ENCODE measurements at regions of chr1 and their contacts with region 1.

Region 1: DNA sequence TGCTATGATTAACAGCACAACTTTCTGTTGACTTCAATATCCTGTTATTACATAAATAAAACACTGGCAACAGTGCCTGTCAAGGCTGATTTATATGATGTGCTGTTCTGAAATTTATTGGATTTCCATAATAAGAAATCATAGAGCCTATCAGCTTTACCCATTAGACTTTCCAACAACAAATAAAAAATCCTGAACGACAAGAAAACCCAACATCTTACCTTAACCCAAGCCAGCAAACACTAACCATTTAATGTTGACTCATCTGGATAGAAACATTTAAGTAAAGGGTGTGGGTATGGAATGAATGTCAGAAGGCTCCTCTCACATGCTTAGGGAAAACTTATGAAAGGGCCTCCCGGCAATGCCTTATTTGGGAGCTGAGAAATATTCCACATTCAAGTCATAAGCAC is 165.1 kb downstream of the SLC45A1 start:
- DNase-seq: no peak
- ATAC-seq: no peak
- H3K4me3 ChIP-seq: no peak overlapping the region
- H3K27ac ChIP-seq: no peak overlapping the region
- H3K4me1 ChIP-seq: peaks cover 6% of the 10 kb centered on the region
- H3K27me3 ChIP-seq: no peaks in the 10 kb centered on the region
- CTCF ChIP-seq: no peak
- EP300 ChIP-seq: no peak
- POLR2A ChIP-seq: no peak
- RAD21 ChIP-seq: no peak

Region 2: DNA sequence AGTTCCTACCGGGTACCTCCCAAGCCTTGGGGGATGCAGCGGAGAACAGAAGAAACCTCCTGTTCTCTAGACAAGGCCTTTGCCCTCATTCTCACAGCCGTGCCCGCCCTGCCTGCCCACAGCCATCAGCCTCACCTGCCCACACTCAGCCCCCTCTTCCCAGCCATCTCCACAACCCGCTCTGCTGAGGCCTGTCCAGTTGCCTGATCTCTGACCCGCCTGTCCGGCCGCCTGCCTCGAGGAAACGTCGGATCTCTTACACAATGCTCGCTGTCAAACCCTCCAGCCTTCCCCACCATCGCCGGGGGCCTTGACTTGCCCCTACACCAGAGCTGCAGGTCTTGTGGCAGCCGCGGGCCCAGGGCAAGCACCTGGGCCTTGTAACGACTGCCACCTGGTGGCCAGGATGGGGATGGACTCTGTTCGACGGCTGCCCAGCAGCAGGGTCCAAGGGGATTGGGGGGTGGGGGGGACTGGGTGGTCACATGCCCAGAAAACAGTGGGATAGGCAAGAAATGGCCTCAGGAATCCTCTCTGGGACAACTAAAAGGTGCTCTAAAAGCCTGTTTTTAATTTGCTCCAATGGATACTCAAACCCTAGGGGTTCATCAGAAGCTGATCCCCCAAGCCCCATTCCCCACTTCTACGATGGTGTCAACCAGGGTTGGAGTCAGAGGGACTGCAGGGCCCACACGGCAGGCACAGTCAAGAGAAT is 134.1 kb before region 1 on chr1:
- CTCF ChIA-PET with region 1: no interaction called
- POLR2A ChIA-PET with region 1: no interaction called
- RAD21 ChIA-PET with region 1: no interaction called
- SMC1A ChIA-PET with region 1: no interaction called
- in situ Hi-C with region 1: no loop called
- intact Hi-C with region 1: no loop called
- DNase-seq: no peak
- ATAC-seq: peak; percentile 88
- H3K4me3 ChIP-seq: no peak overlapping the region
- H3K27ac ChIP-seq: no peak overlapping the region
- H3K4me1 ChIP-seq: no peaks in the 10 kb centered on the region
- H3K27me3 ChIP-seq: no peaks in the 10 kb centered on the region
- CTCF ChIP-seq: peak; percentile 70 to 91 (median 78)
- EP300 ChIP-seq: no peak
- POLR2A ChIP-seq: no peak
- RAD21 ChIP-seq: peak; percentile 86

Region 3: GRCh38 chr1:8494681-8495080 is 11.7 kb after region 1 on chr1:
- CTCF ChIA-PET with region 1: interaction called, 6 read pairs
- POLR2A ChIA-PET with region 1: no interaction called
- RAD21 ChIA-PET with region 1: no interaction called
- SMC1A ChIA-PET with region 1: interaction called, 23 read pairs
- in situ Hi-C with region 1: no loop called
- intact Hi-C with region 1: no loop called
- DNase-seq: no peak
- ATAC-seq: no peak
- H3K4me3 ChIP-seq: no peak overlapping the region
- H3K27ac ChIP-seq: peak overlapping the region; percentile 43
- H3K4me1 ChIP-seq: peaks cover 43% of the 10 kb centered on the region
- H3K27me3 ChIP-seq: no peaks in the 10 kb centered on the region
- CTCF ChIP-seq: no peak
- EP300 ChIP-seq: no peak
- POLR2A ChIP-seq: no peak
- RAD21 ChIP-seq: no peak